ENCODE measurements at regions of chr3 and their contacts with region 1.

Region 1: GRCh38 chr3:132038198-132038825 is 3.5 kb upstream of the CPNE4 start:
- DNase-seq: peak; percentile 23
- H3K27ac ChIP-seq: no peak overlapping the region
- CTCF ChIP-seq: peak; percentile 67

Region 2: GRCh38 chr3:132180337-132180791 is 142.1 kb after region 1 on chr3:
- CTCF ChIA-PET with region 1: interaction called, 21 read pairs
- POLR2A ChIA-PET with region 1: no interaction called
- DNase-seq: peak; percentile 57
- H3K27ac ChIP-seq: no peak overlapping the region
- CTCF ChIP-seq: peak; percentile 65

Region 3: GRCh38 chr3:132210476-132211346 is 172.4 kb after region 1 on chr3:
- CTCF ChIA-PET with region 1: interaction called, 16 read pairs
- POLR2A ChIA-PET with region 1: no interaction called
- DNase-seq: peak; percentile 23
- H3K27ac ChIP-seq: no peak overlapping the region
- CTCF ChIP-seq: peak; percentile 38